Cardiac septum (tissue), 1 donor: ENCODE measurements at regions of chr18 and their contacts with region 1.

Region 1: DNA sequence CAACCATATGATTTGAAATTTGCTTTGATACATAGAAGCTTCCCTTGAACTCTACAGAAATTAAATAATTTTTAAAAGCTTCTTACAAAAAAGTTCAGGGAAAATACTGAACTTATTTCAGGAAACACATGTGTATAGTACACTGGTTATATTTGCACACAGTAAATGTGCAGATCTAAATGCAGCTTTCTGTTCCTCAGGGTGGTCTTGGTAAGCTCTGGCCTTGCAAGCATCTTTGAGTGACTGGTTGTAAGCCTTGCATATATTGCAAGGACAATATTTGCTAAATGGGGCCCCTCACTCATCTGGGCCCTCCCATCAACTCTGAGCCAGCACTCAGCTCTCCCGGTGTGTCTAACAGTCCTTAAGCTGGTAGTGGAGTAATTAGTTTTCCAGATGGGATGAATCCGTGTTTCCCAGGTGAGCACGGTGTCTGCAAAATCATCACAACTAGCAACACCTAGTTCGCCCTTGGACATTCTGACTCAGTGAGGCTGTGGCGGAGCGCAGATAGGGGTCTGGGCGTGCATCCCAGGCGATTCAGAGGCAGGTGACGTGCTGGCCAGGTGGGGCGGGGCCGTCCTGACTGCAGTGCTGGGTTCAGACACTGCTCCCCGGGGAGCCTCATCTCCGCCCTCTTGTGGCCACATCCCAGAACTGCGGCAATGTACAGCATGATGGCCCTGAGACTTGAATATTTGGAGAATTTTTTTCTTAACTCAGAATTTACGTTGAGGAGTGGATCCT is 149.6 kb downstream of the MBP start:
- DNase-seq: peak; percentile 92

Region 2: DNA sequence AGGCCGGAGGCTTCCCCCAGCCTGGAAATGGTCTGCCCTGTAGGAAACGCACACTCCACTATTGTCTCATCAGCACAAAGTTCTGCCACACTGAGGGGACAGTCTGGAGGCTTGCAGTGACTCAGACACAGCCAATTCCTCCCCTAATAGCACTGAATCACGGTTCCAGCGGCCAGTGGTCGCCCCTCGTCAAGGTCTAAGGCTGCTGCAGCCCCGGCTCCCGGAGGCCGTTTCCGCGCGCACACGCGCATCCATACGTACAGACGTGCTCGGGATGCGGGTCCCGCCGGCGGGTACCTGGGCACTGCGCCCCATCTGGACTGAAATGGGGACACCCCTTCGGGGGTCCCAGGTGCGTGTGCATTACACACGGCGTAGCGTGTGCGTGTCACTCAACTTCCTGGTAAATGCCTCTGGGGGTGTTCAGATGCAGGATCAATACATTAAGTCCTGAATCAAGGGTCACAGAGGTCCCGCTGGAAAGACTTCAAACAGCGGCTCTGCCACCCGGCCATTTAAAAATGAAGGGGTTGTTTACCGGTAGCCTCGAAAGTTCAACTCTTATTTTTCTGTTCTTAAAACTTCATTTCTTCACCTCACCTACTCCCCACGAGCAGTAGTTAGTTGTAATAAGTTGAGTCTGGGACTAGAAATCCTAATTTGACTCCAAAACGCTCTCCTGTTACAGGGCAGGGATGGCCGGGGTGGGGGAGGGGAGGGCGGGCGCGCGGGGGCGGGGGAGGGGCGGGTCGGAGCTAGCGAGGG is 487.4 kb before region 1 on chr18:
- intact Hi-C with region 1: no loop called
- DNase-seq: no peak

Region 3: GRCh38 chr18:76657428-76657827 is 325.6 kb before region 1 on chr18:
- intact Hi-C with region 1: no loop called
- DNase-seq: no peak

Region 4: GRCh38 chr18:76803814-76804213 is 179.2 kb before region 1 on chr18:
- intact Hi-C with region 1: loop called (anchors 5 kb)
- DNase-seq: no peak

Region 5: DNA sequence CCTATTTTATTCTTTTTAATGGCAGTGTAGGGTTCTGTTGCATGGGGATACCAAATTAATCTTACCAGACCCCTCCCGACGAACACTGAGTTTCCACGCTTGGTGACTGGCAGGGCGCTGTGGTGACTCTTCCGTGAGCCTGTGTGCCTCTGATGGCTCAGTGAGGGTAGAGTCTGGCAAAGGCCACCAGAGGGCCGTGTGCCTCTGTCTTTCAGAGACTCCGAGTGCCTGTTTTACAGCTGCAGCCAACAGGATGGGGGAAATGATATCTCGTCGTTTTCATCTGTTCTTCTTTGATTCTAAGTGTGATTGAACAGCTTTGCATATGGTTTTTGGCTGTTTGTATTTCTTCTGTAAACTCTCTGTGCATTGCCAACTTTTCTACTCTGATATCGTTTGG is 60.9 kb before region 1 on chr18:
- intact Hi-C with region 1: loop called (anchors 10 kb)
- DNase-seq: no peak

Region 6: DNA sequence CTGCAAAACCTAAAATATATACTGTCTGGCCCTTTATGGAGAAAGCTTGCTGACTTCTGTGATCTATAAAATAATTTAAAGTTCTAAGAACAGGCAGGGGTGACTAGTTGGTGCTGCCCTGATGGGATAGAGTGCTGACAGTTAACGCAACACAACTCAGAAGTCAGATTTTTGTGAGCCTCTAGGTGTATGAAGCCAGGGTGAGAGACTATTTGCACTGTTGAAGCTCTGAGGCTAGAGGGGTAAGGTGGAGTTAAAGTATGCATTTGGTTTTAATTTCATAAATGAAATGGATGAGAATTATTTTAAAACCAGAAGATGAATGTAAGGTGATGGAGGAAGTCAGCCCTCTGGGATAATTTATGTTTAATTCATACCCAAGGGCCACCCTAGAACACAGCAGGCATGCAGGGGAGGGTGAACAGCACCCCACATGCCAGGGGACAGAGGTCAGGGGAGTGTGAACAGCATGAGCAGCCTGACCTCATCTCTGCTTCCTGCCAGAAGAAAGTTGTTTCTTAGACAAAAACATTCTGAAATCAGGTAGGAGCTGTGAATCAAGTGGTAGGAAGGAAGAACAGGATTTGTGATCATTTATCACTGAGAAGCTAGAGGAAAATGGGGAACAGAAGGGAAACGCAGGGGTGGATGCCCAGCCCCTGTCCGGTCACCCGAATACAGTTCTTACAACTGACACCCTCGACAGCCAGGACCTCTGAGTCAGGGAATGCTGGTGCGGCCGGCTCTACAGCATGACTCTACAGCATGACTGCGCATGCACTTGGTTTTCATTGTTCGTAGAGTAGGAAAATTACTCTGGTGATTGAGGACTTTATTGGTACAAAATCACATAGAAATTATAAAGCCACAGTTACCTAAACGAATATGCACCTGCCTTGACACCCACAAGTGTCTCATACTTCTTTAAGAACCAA is 56.4 kb after region 1 on chr18:
- intact Hi-C with region 1: no loop called
- DNase-seq: no peak